ENCODE measurements at regions of chr2 and their contacts with region 1.

Region 1: GRCh38 chr2:120174963-120175581 is 48.1 kb downstream of the TMEM185B start:
- H3K4me3 Mint-ChIP-seq: no peak overlapping the region
- H3K27ac Mint-ChIP-seq: no peak overlapping the region
- H3K4me1 Mint-ChIP-seq: peaks cover 7% of the 10 kb centered on the region
- H3K27me3 Mint-ChIP-seq: peaks cover 19% of the 10 kb centered on the region

Region 2: GRCh38 chr2:119647440-119648169 is 527.5 kb before region 1 on chr2:
- intact Hi-C with region 1: loop called (anchors 5 kb)
- H3K4me3 Mint-ChIP-seq: no peak overlapping the region
- H3K27ac Mint-ChIP-seq: no peak overlapping the region
- H3K4me1 Mint-ChIP-seq: peaks cover 16% of the 10 kb centered on the region
- H3K27me3 Mint-ChIP-seq: peaks cover 1% of the 10 kb centered on the region

Region 3: DNA sequence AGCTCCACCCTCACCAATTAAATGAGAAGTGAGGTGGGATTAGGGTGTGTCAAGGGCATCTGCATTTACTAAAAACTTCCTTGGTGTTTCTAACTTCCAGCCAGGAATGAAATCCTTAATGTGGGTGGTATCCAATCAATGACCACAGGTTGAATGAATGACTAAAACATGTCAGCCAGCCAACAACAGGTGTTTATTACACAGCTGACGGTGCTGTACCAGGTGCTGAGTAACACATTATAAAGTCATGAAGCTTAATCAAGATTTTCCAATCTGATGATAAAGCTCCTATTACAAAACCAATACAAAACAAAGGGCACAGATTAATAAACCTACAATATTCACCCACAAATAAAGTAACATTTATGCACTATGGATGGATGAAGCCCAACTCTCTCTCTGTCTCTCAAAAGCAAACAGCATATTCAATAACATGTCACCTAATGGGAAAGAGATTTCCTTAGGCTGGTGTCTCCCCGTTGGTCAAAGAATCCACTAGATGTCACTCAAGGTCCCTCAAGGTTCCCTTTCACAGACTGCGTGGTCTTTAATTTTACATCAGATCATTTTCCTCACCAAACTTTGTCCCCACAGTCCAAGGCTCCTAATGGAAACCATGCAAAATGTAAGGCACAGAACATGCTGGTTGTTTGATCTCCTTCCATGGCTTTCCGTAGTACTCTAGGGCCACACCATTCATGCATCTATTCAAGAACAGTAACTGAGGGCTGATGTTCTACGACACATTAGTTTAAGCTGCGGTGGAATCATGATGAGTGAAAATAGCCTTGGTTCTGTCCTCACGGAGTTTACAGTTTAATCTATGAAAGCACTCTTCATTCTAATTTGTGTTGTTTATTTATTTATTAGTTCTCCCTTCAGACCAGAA is 421.8 kb before region 1 on chr2:
- intact Hi-C with region 1: loop called (anchors 2 kb)
- H3K4me3 Mint-ChIP-seq: no peak overlapping the region
- H3K27ac Mint-ChIP-seq: no peak overlapping the region
- H3K4me1 Mint-ChIP-seq: peaks cover 14% of the 10 kb centered on the region
- H3K27me3 Mint-ChIP-seq: no peaks in the 10 kb centered on the region

Region 4: DNA sequence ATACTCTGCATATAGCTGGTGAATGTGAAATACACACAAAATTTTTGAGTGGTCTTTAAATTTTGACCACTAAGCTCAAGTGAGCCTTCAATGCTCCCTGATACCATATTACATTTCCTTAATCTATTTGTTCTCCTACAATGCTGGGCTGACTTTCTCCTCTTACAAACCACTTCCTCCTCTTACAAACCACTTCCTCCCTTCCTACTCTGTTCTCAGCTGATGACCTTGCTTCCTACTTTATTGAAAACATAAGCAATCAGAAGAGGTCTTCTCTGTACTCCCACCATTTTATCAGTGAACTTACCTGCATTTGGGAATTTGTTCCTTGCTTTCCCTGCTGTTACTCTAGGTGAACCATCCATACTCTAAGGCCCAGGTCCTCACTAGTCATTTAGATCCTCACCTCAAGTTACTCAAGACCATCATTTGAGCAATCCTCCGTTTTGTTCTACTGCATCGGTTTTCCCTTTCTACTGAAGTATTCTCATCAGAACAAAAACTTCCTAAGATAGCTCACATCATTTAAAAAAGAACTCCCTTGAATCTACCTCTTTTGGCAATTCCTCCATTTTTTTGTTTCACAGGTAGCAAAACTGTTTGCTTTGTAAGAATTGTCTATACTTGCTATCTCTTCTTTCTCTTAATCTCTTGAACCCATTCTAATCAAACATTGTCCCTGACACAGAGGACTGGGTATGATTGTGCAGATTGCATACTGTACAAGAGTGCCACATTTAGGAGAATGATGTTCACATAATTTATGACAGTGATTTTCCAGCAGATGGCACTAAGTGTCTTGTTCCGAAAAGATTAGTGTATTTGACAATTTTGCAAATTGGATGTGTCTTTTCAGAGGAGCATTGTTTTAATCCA is 65.6 kb before region 1 on chr2:
- intact Hi-C with region 1: loop called (anchors 1 kb)
- H3K4me3 Mint-ChIP-seq: no peak overlapping the region
- H3K27ac Mint-ChIP-seq: no peak overlapping the region
- H3K4me1 Mint-ChIP-seq: peaks cover 32% of the 10 kb centered on the region
- H3K27me3 Mint-ChIP-seq: peaks cover 24% of the 10 kb centered on the region

Region 5: DNA sequence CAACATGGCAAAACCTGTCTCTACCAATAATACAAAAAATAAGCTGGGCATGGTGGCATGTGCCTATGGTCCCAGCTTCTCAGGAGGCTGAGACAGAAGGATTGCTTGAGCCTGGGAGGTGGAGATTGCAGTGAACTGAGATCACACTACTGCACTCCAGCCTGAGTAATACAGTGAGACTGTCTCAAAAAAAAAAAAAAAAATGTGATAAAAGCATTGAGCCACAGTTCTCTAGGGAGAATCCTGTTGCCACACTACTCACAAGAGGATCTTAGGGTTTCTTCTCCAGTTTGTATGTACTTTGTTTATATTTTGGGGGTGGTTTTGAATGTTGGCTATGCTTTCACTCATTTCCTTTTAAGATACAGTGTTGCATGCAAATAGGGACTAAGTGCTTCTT is 13.9 kb before region 1 on chr2:
- intact Hi-C with region 1: no loop called
- H3K4me3 Mint-ChIP-seq: no peak overlapping the region
- H3K27ac Mint-ChIP-seq: no peak overlapping the region
- H3K4me1 Mint-ChIP-seq: no peaks in the 10 kb centered on the region
- H3K27me3 Mint-ChIP-seq: no peaks in the 10 kb centered on the region

Region 6: GRCh38 chr2:120312861-120313694 is 138.0 kb after region 1 on chr2:
- intact Hi-C with region 1: loop called (anchors 5 kb)
- H3K4me3 Mint-ChIP-seq: peak overlapping the region; percentile 50
- H3K27ac Mint-ChIP-seq: no peak overlapping the region
- H3K4me1 Mint-ChIP-seq: peaks cover 11% of the 10 kb centered on the region
- H3K27me3 Mint-ChIP-seq: peaks cover 42% of the 10 kb centered on the region

Measured in dendritic cell treated with granulocyte-macrophage colony-stimulating factor and Interleukin-4, amounts not matched to agents 40 ng/mL and 50 ng/mL, for 4 days (primary cell).